ENCODE measurements at regions of chrX and their contacts with region 1.

Region 1: DNA sequence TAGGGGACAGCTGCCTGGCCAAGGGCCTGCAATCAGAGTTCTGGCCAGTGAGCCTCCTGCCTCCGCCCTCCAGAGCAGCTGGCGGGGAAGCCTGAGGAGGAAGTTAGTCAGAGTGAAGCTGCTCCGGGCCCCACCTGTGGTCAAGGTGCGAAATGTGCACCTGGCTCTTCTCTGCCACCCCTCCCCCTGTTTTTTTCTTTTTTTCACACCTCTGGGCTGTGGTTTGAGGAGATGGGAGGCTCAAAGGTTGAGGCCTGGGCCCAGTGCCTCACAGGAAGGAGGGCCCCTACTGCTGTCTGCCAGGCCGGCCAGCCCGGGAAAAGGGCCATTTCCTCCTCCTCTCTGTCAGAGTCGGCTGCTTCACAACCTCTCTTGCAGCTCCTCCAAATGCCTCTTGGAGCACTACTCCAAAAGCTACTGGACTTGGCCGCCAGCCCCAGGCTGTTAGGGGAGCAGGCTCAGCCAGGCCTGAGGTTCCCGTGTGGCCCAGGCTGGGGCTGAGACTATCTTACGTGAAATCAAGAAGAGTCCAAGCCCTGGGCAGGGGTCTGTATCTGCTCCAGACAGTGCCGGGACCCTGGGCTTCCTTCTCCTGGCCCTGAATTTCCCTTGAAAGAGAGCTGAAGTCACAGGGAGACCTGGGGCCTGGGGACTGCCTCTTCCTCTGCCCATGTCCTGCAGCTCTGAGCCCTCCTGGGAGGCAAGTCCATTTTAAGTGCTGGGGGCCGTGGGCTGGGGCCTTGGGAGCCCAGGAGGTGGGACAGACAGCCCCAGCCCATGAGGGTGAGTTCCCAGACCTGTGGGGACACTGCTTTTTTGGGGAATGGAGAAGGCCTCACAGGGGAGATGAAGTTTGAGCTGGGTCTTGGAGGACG is 4.5 kb upstream of the CXCR3 start:
- DNase-seq: peak; percentile 39 to 90 (median 68)
- ATAC-seq: peak; percentile 53
- H3K4me3 ChIP-seq: peak overlapping the region; percentile 6 to 21
- H3K4me3 Mint-ChIP-seq: peak overlapping the region; percentile 63
- H3K27ac ChIP-seq: peak overlapping the region; percentile 59 to 85
- H3K27ac Mint-ChIP-seq: peak overlapping the region; percentile 93
- H3K4me1 ChIP-seq: peaks cover 63% of the 10 kb centered on the region
- H3K4me1 Mint-ChIP-seq: peaks cover 66% of the 10 kb centered on the region
- H3K27me3 ChIP-seq: no peaks in the 10 kb centered on the region
- H3K27me3 Mint-ChIP-seq: no peaks in the 10 kb centered on the region
- CTCF ChIP-seq: no peak

Region 2: DNA sequence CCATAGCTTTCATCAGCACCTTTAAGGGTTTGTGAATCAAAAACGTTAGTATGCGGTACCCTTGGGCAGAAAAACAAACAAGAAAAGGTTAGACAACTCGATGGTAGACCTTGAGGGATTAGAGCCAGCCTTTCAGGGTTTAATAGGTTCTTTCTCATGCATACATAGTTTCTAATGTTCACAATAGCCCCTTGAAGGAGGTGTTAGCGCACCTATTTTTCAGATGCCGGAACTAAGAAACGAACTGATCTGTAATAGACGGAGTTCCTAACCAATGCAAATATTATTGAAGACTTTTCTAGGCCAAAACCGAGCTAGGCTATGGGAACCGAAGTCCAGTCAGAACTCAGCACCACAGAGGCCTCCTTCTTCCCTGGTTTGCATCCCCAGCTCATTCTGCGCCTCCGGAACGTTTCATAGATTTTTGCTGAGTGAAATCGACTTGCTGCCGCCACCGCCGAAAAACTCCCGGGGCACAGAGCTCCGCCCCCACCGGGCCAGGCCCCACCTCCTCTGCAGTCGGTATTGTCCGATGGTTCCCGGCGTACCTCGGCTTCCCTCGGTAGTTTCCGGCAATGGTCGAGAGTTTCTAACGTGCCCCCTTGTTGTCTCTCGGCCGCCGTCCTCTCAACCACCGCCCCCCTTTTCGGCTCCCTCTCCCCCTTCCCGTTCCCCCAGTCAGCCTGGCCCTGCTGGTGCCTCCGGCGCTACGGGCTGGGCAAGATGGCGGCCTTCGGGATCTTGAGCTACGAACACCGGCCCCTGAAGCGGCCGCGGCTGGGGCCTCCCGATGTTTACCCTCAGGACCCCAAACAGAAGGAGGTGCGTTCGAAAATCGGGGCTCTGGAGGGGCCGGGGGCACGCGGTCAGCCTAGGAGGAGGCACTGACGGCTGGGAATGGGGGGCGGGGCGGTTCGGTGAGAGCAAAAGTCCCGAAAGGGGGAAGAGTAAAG is 504.5 kb before region 1 on chrX and contains the start of gene MED12:
- CTCF ChIA-PET with region 1: no interaction called
- POLR2A ChIA-PET with region 1: no interaction called
- intact Hi-C with region 1: loop called in 1 of 2 experiments (anchors 10 kb)
- DNase-seq: peak; percentile 56 to 90 (median 83)
- ATAC-seq: peak; percentile 97
- H3K4me3 ChIP-seq: peak within 1 kb of the TSS; percentile 68 to 73
- H3K4me3 Mint-ChIP-seq: peak within 1 kb of the TSS; percentile 87
- H3K27ac ChIP-seq: peak within 1 kb of the TSS; percentile 78 to 82
- H3K27ac Mint-ChIP-seq: peak within 1 kb of the TSS; percentile 94
- H3K4me1 ChIP-seq: peaks cover 27% of the 10 kb centered on the region
- H3K4me1 Mint-ChIP-seq: peaks cover 36% of the 10 kb centered on the region
- H3K27me3 ChIP-seq: no peaks in the 10 kb centered on the region
- H3K27me3 Mint-ChIP-seq: no peaks in the 10 kb centered on the region
- CTCF ChIP-seq: no peak
- total RNA-seq, gene MED12: 54.5 to 57.4 TPM

Region 3: DNA sequence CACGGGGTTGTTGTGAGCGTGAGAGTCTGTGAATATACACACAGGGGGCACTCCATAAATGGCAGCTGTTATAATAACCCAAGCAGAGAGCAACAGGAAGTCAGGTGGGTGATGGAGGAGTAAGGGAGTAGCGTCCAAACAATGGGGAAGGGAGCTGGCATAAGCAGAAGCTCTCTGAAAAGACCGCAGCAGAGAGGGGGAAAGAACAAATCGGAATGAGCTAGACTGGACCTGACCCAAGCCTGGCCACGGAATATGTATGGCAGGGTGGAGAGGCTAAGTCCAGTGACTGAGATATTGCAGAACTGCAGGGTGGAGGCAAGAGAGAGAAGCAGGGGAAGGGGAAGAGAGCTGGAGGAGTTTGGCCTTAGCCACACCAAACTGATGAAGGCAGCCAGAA is 406.3 kb before region 1 on chrX:
- CTCF ChIA-PET with region 1: no interaction called
- POLR2A ChIA-PET with region 1: no interaction called
- intact Hi-C with region 1: no loop called
- DNase-seq: peak in 1 of 9 experiments; percentile 4
- ATAC-seq: no peak
- H3K4me3 ChIP-seq: no peak overlapping the region
- H3K4me3 Mint-ChIP-seq: no peak overlapping the region
- H3K27ac ChIP-seq: no peak overlapping the region
- H3K27ac Mint-ChIP-seq: no peak overlapping the region
- H3K4me1 ChIP-seq: no peaks in the 10 kb centered on the region
- H3K4me1 Mint-ChIP-seq: peaks cover 7% of the 10 kb centered on the region
- H3K27me3 ChIP-seq: no peaks in the 10 kb centered on the region
- H3K27me3 Mint-ChIP-seq: no peaks in the 10 kb centered on the region
- CTCF ChIP-seq: no peak

Region 4: DNA sequence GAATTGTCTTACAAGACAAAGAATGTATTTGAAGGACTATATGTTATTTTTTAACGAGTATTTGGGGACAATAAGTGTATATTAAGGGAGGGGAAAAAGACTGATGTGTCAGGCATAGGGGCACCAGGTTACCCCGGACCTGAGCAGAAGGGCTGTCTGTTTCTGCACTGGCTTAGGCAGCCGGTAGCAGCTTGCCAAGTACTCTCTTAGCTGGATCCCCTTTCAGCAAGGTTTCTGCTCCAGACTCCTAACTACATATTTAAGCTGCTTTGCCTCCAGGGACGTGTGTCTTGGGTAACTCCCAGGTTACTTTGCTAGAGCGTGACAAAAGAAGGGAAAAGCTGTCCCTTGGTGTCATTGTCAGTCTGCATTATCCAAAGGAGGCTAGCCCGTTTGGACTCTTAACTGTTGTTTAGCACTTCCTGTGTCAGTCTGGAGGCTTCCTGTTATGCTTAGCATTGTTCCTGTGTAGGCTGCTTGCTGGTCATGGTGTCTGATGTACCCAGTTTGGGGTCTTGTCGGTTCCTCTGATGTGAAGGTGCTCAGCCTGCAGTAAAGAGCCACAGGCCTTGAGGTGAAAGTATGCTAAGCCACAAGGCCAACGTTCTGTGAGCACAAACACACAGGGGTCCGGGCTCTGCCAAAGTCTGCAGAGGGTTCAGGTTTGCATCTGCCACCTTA is 16.1 kb before region 1 on chrX:
- CTCF ChIA-PET with region 1: interaction called, 14 read pairs
- POLR2A ChIA-PET with region 1: interaction called, 8 read pairs
- intact Hi-C with region 1: loop called (anchors 2 kb)
- DNase-seq: peak in 8 of 9 experiments; percentile 19 to 84 (median 61)
- ATAC-seq: peak; percentile 84
- H3K4me3 ChIP-seq: no peak overlapping the region
- H3K4me3 Mint-ChIP-seq: peak overlapping the region; percentile 53
- H3K27ac ChIP-seq: peak overlapping the region; percentile 61 to 69
- H3K27ac Mint-ChIP-seq: peak overlapping the region; percentile 91
- H3K4me1 ChIP-seq: peaks cover 52% of the 10 kb centered on the region
- H3K4me1 Mint-ChIP-seq: peaks cover 70% of the 10 kb centered on the region
- H3K27me3 ChIP-seq: no peaks in the 10 kb centered on the region
- H3K27me3 Mint-ChIP-seq: no peaks in the 10 kb centered on the region
- CTCF ChIP-seq: no peak

Region 5: DNA sequence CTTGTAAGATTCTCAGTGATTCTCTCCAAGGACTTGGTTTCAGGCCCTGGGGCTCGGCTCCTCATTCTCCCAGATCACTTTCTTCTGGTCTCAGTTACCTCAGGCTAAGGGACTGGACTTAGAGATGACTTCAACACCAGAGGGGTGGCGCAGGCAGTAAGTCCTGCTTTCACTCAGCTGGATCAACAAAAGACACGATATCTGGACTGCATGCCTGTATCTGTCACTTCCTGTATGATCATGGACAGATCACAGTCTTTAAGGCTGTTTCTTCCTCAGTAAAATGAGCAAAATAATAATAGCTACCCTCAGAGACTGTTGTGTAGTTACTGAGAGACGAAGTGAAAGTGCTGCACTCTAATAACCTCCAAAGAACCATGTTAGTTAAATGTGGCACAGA is 15.0 kb after region 1 on chrX:
- CTCF ChIA-PET with region 1: no interaction called
- POLR2A ChIA-PET with region 1: interaction called, 16 read pairs
- intact Hi-C with region 1: loop called in 1 of 2 experiments (anchors 2 kb)
- DNase-seq: peak in 1 of 9 experiments; percentile 33
- ATAC-seq: peak; percentile 15
- H3K4me3 ChIP-seq: no peak overlapping the region
- H3K4me3 Mint-ChIP-seq: no peak overlapping the region
- H3K27ac ChIP-seq: peak overlapping the region in 1 of 2 experiments; percentile 39
- H3K27ac Mint-ChIP-seq: no peak overlapping the region
- H3K4me1 ChIP-seq: peaks cover 38% of the 10 kb centered on the region
- H3K4me1 Mint-ChIP-seq: peaks cover 17% of the 10 kb centered on the region
- H3K27me3 ChIP-seq: no peaks in the 10 kb centered on the region
- H3K27me3 Mint-ChIP-seq: no peaks in the 10 kb centered on the region
- CTCF ChIP-seq: no peak

Region 6: DNA sequence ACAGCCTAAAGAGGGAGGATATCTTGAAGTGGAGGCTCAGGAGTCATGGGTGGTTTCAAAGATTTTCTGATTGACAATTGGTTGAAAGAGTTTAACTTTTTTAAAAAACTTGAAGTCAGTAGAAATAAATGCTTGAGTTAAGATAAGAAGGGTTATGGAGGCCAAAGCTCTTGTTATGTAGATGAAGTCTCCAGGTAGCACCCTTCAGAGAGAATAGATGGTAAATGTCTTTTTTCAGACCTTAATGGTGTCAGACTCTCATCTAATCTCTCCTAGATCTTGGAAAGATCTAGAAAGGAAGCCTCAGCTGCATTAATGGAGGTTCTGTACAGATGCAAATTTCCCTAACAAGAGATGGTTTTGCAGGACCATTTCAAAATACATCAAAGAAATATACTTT is 1933.3 kb after region 1 on chrX:
- CTCF ChIA-PET with region 1: no interaction called
- POLR2A ChIA-PET with region 1: no interaction called
- intact Hi-C with region 1: no loop called
- DNase-seq: no peak
- ATAC-seq: no peak
- H3K4me3 ChIP-seq: no peak overlapping the region
- H3K4me3 Mint-ChIP-seq: no peak overlapping the region
- H3K27ac ChIP-seq: no peak overlapping the region
- H3K27ac Mint-ChIP-seq: no peak overlapping the region
- H3K4me1 ChIP-seq: no peaks in the 10 kb centered on the region
- H3K4me1 Mint-ChIP-seq: peaks cover 7% of the 10 kb centered on the region
- H3K27me3 ChIP-seq: no peaks in the 10 kb centered on the region
- H3K27me3 Mint-ChIP-seq: no peaks in the 10 kb centered on the region
- CTCF ChIP-seq: no peak

Measured in CD8-positive, alpha-beta T cell (primary cell).